ENCODE measurements at regions of chr6 and their contacts with region 1.

Region 1: DNA sequence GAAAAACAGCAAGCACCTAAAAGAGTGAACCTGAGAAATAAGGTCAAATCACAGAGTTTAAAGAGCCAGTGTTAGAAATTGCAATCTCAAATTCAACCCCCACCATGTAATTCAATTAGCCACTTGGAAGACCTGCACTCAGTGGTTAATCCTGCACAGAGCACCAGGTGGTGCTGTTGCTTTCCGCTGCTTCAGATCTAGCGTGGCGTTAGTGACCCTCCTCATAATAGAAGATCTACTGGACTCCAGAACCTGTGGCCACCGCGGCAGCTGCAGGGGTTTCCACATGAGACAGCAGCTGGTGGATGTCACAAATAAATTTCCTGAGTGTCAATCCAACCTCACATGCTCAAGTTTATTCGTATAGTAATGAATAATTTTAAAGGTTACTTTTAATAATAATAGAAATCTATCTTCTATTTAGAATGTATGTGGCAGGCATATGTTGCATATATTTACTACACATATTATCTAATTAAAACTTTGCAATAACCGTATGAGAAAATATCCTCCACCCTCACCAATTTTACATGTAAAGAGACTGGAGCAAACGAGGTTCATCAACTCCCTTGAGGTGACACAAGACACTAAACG is 84.4 kb downstream of the SYNE1 start:
- DNase-seq: peak; percentile 51 to 71
- ATAC-seq: peak; percentile 54 to 87 (median 84)
- H3K4me3 ChIP-seq: no peak overlapping the region
- H3K27ac ChIP-seq: no peak overlapping the region
- H3K4me1 ChIP-seq: no peaks in the 10 kb centered on the region
- H3K27me3 ChIP-seq: no peaks in the 10 kb centered on the region
- CTCF ChIP-seq: peak; percentile 80

Region 2: GRCh38 chr6:152642989-152643388 is 90.3 kb after region 1 on chr6:
- intact Hi-C with region 1: loop called in 1 of 2 experiments (anchors 10 kb)
- DNase-seq: peak in 1 of 2 donors; percentile 52
- ATAC-seq: peak in 2 of 4 donors; percentile 49 to 53
- H3K4me3 ChIP-seq: no peak overlapping the region
- H3K27ac ChIP-seq: no peak overlapping the region
- H3K4me1 ChIP-seq: no peaks in the 10 kb centered on the region
- H3K27me3 ChIP-seq: no peaks in the 10 kb centered on the region
- CTCF ChIP-seq: peak; percentile 45

Region 3: GRCh38 chr6:152669895-152670294 is 117.2 kb after region 1 on chr6:
- intact Hi-C with region 1: loop called in 1 of 2 experiments (anchors 10 kb)
- DNase-seq: no peak
- ATAC-seq: no peak
- H3K4me3 ChIP-seq: no peak overlapping the region
- H3K27ac ChIP-seq: no peak overlapping the region
- H3K4me1 ChIP-seq: no peaks in the 10 kb centered on the region
- H3K27me3 ChIP-seq: no peaks in the 10 kb centered on the region
- CTCF ChIP-seq: peak; percentile 39

Region 4: DNA sequence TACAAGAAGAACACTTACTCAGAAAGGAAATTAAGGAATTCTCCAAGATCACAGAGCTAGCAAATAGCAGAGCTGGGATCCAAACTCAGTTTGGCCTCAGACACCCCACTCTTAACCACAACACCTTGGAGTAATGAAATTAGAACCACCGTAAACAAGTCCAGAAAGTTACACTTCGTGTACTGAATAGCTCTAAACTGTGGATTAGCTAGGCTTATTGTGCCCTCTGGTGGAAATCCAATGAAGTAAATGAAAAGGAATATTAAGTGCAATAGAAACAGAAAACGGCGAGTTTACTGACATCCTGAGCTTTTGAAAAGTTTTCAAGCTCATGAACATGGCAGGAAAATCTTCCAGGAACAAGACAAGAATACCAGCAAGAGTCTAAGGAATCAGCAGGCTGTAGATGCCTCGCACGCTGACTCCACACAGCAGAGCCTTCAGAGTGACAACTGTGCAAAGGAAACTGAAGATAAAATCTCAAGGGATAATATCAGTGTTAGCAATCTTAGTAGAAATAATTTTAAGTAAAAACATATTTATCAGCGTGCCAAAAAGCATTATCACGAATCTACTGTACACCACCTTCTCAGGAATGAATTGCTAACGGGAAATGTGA is 395.5 kb after region 1 on chr6:
- intact Hi-C with region 1: loop called (anchors 5 to 10 kb)
- DNase-seq: no peak
- ATAC-seq: peak in 3 of 4 donors; percentile 56 to 90 (median 68)
- H3K4me3 ChIP-seq: peak overlapping the region; percentile 36
- H3K27ac ChIP-seq: no peak overlapping the region
- H3K4me1 ChIP-seq: peaks cover 12% of the 10 kb centered on the region
- H3K27me3 ChIP-seq: no peaks in the 10 kb centered on the region
- CTCF ChIP-seq: peak; percentile 70